ENCODE measurements at regions of chr15 and their contacts with region 1.

Region 1: GRCh38 chr15:31215490-31216214 is 111.0 kb upstream of the KLF13 start:
- DNase-seq: peak in 1 of 2 experiments; percentile 91
- H3K4me3 ChIP-seq: peak overlapping the region; percentile 43 to 69 (median 44)
- H3K27ac ChIP-seq: no peak overlapping the region
- H3K4me1 ChIP-seq: peaks cover 0 to 11% (median 4%) of the 10 kb centered on the region in 4 experiments; a peak in 5 of 7 replicates
- H3K27me3 ChIP-seq: no peaks in the 10 kb centered on the region; a peak in 2 of 7 replicates
- CTCF ChIP-seq: peak; percentile 76 to 86 (median 86)
- EP300 ChIP-seq: no peak
- POLR2A ChIP-seq: no peak; a peak in 1 of 3 replicates
- RAD21 ChIP-seq: peak; percentile 72 to 81

Region 2: GRCh38 chr15:31004220-31004733 is 211.4 kb before region 1 on chr15:
- CTCF ChIA-PET with region 1: no interaction called
- POLR2A ChIA-PET with region 1: no interaction called
- DNase-seq: no peak
- H3K4me3 ChIP-seq: no peak overlapping the region
- H3K27ac ChIP-seq: no peak overlapping the region
- H3K4me1 ChIP-seq: peaks cover 0 to 6% (median 2%) of the 10 kb centered on the region in 4 experiments; a peak in 4 of 7 replicates
- H3K27me3 ChIP-seq: no peaks in the 10 kb centered on the region
- CTCF ChIP-seq: no peak
- EP300 ChIP-seq: no peak
- POLR2A ChIP-seq: no peak
- RAD21 ChIP-seq: no peak

Region 3: DNA sequence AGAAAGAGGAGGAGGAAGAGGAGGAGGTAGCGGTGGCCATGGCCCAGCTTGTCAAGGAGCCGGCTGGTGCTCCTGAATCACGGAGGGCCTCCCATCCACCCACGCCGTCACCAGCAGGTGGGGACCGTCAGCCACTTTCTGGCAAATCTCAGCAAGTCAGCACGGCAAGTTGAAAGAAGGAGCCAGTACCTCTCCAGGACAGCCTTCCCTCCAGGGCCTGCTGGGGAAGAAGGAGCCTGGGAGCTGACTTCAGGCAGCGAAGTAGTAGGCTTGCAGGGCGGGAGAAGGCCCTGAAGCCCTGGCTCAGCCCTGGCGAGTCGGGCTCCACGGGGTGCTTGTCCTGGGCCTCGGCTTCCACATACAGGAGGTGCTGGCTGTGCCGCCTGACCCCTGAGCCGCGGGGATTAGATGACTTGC is 14.9 kb before region 1 on chr15:
- CTCF ChIA-PET with region 1: interaction called, 18 read pairs
- POLR2A ChIA-PET with region 1: no interaction called
- DNase-seq: peak in 1 of 2 experiments; percentile 76
- H3K4me3 ChIP-seq: no peak overlapping the region
- H3K27ac ChIP-seq: no peak overlapping the region
- H3K4me1 ChIP-seq: peaks cover 0 to 2% (median 0%) of the 10 kb centered on the region in 4 experiments; a peak in 1 of 7 replicates
- H3K27me3 ChIP-seq: no peaks in the 10 kb centered on the region
- CTCF ChIP-seq: peak; percentile 66 to 72 (median 68)
- EP300 ChIP-seq: no peak
- POLR2A ChIP-seq: no peak
- RAD21 ChIP-seq: peak; percentile 80 to 84

Measured in H1 (cell line).